Activated CD4-positive, alpha-beta memory T cell treated with anti-CD3 and anti-CD28 coated beads, Interleukin-2, amount 10 ng/mL, durations not matched to agents 7 days and 5 days (primary cell): ENCODE measurements at regions of chr15 and their contacts with region 1.

Region 1: DNA sequence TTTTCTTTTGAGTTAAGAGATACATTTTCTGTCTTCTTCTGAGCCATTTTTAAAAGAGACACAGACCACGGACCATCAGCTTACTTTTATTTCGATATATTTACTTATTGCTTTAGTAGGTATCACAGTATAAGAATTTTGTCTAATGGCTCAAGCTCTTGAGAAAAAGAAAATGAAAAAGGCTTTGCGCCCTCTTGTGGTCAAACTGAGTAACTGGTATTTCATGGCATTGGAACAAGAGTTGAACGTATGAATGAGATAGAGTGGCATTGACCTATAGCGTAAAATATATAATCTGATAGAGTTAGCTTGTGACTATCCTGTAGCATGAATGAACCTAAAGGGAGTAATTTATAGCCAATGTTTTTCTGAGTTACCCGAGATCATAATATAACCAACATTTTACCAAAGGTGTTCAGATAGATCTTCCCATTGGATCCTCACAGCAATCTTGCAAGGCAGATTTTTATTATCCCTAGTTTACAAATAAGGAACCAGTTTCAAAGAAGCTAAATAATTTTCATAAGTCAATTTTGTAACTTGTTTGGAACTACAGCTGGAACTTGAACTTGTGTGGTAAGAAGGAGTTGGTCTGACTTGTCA is 154.6 kb downstream of the POLR2M start:
- DNase-seq: no peak
- H3K4me3 Mint-ChIP-seq: no peak overlapping the region
- H3K27ac Mint-ChIP-seq: no peak overlapping the region
- H3K4me1 Mint-ChIP-seq: no peaks in the 10 kb centered on the region
- H3K27me3 Mint-ChIP-seq: peaks cover 35% of the 10 kb centered on the region

Region 2: GRCh38 chr15:57706405-57707209 is 154.5 kb before region 1 on chr15 and contains the start of gene POLR2M:
- CTCF ChIA-PET with region 1: interaction called, 10 read pairs
- POLR2A ChIA-PET with region 1: interaction called, 3 read pairs
- DNase-seq: peak; percentile 92
- H3K4me3 Mint-ChIP-seq: peak within 1 kb of the TSS; percentile 92
- H3K27ac Mint-ChIP-seq: peak within 1 kb of the TSS; percentile 77
- H3K4me1 Mint-ChIP-seq: peaks cover 73% of the 10 kb centered on the region
- H3K27me3 Mint-ChIP-seq: no peaks in the 10 kb centered on the region
- total RNA-seq, gene POLR2M: 70.6 to 71.0 TPM

Region 3: GRCh38 chr15:57743424-57743823 is 117.7 kb before region 1 on chr15:
- CTCF ChIA-PET with region 1: interaction called, 156 read pairs
- POLR2A ChIA-PET with region 1: no interaction called
- DNase-seq: no peak
- H3K4me3 Mint-ChIP-seq: no peak overlapping the region
- H3K27ac Mint-ChIP-seq: no peak overlapping the region
- H3K4me1 Mint-ChIP-seq: no peaks in the 10 kb centered on the region
- H3K27me3 Mint-ChIP-seq: peaks cover 3% of the 10 kb centered on the region

Region 4: DNA sequence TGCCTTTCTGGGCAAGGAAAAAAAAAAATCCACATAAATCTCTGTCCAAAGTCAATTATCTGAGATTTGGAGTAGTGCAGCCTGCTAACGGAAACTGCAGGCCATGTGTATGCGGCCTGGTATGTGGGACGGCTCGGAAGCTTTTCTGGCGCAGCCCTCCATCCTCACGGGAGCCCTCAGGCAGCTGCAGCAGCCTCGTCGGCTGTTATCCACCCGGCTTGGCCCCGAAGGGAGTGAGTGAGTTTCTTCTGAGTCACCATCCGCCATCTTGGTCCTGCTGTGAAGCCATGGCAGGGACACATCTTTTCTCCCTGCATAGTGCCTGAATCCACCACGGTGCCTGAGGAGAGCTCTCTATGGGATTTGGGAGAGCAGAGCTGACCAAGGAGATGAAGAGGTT is 91.9 kb before region 1 on chr15:
- CTCF ChIA-PET with region 1: interaction called, 11 read pairs
- POLR2A ChIA-PET with region 1: no interaction called
- DNase-seq: no peak
- H3K4me3 Mint-ChIP-seq: no peak overlapping the region
- H3K27ac Mint-ChIP-seq: no peak overlapping the region
- H3K4me1 Mint-ChIP-seq: peaks cover 28% of the 10 kb centered on the region
- H3K27me3 Mint-ChIP-seq: peaks cover 5% of the 10 kb centered on the region

Region 5: DNA sequence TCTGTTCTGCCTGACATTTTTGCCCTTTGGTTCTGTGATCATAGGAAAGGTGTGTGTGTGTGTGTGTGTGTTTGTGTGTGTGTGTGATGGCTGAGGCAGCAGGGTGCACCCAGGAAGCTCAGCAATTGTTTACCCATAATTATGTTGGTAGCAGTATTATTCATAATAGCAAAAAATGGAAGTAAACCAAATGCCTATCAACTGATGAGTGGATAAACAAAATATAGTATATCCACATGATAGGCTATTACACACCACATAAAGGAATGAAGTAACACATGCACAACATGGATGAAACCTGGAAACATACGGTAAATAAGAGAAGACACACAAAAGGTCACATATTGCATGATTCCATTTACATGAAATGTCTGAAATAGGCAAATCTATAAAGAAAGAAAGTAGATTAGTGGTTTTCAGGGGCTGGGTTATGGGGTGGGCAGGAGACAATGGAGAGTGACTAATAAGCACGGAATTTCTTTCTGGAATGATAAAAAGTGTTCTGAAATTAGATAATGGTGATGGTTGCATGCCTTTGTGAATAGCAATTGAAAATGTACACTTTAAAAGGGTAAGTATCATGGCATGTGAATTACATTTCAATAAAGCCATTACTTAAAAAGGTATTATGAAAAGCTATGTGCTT is 12.6 kb after region 1 on chr15:
- CTCF ChIA-PET with region 1: interaction called, 21 read pairs
- POLR2A ChIA-PET with region 1: interaction called, 3 read pairs
- DNase-seq: no peak
- H3K4me3 Mint-ChIP-seq: no peak overlapping the region
- H3K27ac Mint-ChIP-seq: no peak overlapping the region
- H3K4me1 Mint-ChIP-seq: no peaks in the 10 kb centered on the region
- H3K27me3 Mint-ChIP-seq: peaks cover 47% of the 10 kb centered on the region

Region 6: DNA sequence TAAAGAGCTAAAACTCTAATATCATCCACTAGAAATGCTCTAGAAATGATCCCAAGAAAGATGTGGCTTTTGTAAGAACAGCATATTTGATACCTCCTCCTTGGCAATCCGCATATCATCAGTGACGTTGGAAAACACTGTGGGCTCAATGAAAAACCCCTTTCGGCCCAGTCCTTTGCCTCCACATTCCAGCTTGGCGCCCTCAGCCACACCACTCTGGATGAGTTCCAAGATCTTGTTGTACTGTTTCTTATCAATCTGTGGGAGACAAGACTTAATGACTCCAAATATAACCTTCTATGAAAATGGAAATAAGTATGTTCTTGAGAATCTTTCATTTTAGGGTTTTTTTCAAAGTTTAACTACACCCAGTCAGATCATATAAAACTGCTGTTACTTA is 100.8 kb after region 1 on chr15:
- CTCF ChIA-PET with region 1: no interaction called
- POLR2A ChIA-PET with region 1: no interaction called
- DNase-seq: no peak
- H3K4me3 Mint-ChIP-seq: no peak overlapping the region
- H3K27ac Mint-ChIP-seq: no peak overlapping the region
- H3K4me1 Mint-ChIP-seq: no peaks in the 10 kb centered on the region
- H3K27me3 Mint-ChIP-seq: peaks cover 7% of the 10 kb centered on the region